HCT116 (cell line): ENCODE measurements at regions of chr17 and their contacts with region 1.

Region 1: DNA sequence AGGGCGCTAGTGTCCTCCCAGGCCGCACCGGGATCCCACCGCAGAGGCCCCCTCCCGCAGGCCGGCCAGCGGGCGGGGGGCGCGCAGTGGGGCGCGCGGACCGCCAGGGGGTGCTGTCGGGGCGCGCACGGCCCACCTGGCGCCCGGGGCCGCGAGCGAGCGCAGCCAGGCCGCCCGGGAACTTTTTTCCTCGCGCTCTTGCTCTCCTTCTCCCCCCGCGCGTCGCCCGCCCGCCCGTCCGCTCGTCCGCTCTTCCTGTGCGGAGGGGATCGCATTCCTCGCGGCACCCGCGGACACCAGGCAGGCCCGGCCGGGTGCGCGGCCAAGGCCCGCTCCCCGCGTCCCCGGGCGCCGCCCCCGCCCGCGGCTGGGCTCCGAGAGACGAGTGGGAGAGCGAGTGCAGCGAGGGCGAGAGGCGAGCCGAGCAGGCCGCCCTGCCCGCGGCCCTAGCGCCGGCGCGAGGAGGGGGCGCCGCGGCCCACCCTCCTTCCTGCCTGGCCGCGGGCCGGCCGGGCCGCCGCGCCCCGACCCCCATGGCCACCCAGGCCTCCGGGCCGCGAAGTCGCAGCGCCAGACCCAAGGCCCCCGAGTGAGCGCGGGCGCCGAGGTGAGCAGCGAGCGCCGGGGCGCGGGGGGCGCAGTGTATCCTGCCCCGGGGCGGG is at the start of gene RAI1:
- DNase-seq: no peak
- ATAC-seq: peak; percentile 62
- H3K4me3 ChIP-seq: peak within 1 kb of the TSS; percentile 75 to 86
- H3K27ac ChIP-seq: peak within 1 kb of the TSS; percentile 97
- H3K4me1 ChIP-seq: peaks cover 40 to 56% of the 10 kb centered on the region in 2 experiments
- H3K27me3 ChIP-seq: no peaks in the 10 kb centered on the region
- CTCF ChIP-seq: peak in 2 of 3 experiments; percentile 50 to 51; a peak in 4 of 6 replicates
- POLR2A ChIP-seq: no peak
- RAD21 ChIP-seq: peak; percentile 64
- total RNA-seq, gene RAI1: 38.5 TPM

Region 2: DNA sequence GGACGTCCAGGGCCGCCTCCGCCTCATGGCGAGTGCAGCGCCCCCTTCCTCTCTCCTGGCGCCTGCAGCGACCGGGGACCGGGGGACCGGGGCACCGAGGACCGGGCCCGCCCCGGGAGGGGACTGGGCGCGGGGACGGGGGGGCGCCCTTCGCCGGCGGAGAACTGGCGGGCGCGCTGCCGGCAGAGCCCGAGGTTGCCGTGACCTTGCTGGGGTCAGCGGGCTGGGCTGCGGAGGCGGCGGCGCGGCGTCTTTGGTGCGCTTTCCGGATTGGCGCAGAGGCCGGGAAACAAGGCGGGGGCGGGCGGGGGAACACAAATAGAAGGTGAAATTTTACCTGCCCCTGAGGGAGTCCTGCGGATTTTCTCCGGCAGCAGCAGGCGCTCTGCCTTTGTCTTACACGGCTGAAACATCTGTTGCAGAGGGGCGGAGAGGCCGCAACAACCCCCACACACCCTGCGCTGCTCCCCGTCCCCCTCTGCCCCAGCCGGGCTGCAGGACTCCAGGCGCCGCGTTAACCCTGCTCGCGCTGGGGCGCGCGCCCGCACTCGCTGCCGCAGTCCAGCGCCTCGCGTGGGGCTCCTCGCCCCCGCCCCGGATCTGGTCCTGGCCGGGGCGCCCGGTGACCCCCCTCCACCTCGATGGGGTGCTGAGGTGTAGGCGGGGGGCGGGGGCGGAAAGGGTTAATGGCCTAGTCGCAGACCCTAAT is 102.0 kb after region 1 on chr17:
- CTCF ChIA-PET with region 1: no interaction called
- POLR2A ChIA-PET with region 1: no interaction called
- RAD21 ChIA-PET with region 1: no interaction called
- intact Hi-C with region 1: loop called (anchors 10 kb)
- DNase-seq: no peak
- ATAC-seq: peak; percentile 72
- H3K4me3 ChIP-seq: peak overlapping the region; percentile 41 to 61
- H3K27ac ChIP-seq: peak overlapping the region; percentile 80
- H3K4me1 ChIP-seq: peaks cover 48 to 72% of the 10 kb centered on the region in 2 experiments
- H3K27me3 ChIP-seq: no peaks in the 10 kb centered on the region
- CTCF ChIP-seq: peak in 1 of 3 experiments; percentile 32; a peak in 2 of 6 replicates
- POLR2A ChIP-seq: no peak
- RAD21 ChIP-seq: no peak

Region 3: GRCh38 chr17:17836250-17836817 is 155.0 kb after region 1 on chr17:
- CTCF ChIA-PET with region 1: interaction called, 4 read pairs
- POLR2A ChIA-PET with region 1: interaction called, 6 read pairs
- RAD21 ChIA-PET with region 1: no interaction called
- intact Hi-C with region 1: loop called (anchors 10 kb)
- DNase-seq: peak; percentile 92
- ATAC-seq: peak; percentile 70
- H3K4me3 ChIP-seq: peak overlapping the region; percentile 78 to 84
- H3K27ac ChIP-seq: peak overlapping the region; percentile 98
- H3K4me1 ChIP-seq: peaks cover 55 to 84% of the 10 kb centered on the region in 2 experiments
- H3K27me3 ChIP-seq: no peaks in the 10 kb centered on the region
- CTCF ChIP-seq: no peak
- POLR2A ChIP-seq: peak; percentile 97
- RAD21 ChIP-seq: peak; percentile 15; the same call in 1 of the 2 replicates

Region 4: DNA sequence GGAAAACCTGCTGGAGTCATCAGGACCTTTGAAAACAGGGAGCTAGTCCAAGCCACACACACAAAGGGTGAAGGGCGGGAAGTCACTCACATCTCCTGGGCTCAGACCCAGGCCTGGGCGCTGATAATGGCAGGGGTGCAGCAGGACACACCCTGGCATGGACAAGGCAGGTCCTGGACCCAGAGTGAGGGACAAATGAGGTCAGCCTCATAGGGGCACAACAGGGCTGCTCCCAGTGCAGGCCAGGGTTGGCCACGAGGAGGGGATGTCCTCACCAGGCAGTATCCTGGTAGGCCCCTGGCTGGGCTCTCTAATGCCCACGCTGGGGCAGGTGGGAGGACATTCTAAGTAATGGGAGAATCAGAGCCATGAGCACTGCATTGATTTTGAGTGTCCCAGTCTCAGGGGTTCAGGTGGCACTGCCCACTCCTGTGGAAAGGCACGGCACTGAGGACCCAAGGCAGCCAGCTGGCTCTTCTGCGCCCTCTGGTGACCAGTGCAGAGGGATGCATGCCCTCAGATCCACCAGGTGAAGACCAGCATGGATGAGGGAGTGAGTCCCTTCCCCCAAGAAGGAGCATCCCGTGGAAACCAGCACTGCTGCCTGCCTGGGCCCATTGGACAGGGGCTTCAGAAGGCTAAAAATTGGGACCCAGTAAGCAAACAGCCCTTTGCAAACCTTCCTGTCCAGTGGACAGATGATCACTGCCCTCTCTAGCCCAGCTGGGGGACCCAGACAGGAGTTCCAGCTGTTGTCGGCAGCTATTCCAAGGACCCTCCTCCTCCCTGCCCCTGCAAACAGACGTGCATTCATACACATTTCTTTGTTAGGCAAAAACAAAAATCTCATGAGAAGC is 178.8 kb after region 1 on chr17:
- CTCF ChIA-PET with region 1: no interaction called
- POLR2A ChIA-PET with region 1: no interaction called
- RAD21 ChIA-PET with region 1: no interaction called
- intact Hi-C with region 1: loop called (anchors 1 kb)
- DNase-seq: no peak
- ATAC-seq: peak; percentile 98
- H3K4me3 ChIP-seq: no peak overlapping the region
- H3K27ac ChIP-seq: no peak overlapping the region
- H3K4me1 ChIP-seq: peaks cover 24 to 36% of the 10 kb centered on the region in 2 experiments; a peak in 3 of 4 replicates
- H3K27me3 ChIP-seq: no peaks in the 10 kb centered on the region
- CTCF ChIP-seq: peak; percentile 92 to 97 (median 93)
- POLR2A ChIP-seq: no peak
- RAD21 ChIP-seq: peak; percentile 99

Region 5: DNA sequence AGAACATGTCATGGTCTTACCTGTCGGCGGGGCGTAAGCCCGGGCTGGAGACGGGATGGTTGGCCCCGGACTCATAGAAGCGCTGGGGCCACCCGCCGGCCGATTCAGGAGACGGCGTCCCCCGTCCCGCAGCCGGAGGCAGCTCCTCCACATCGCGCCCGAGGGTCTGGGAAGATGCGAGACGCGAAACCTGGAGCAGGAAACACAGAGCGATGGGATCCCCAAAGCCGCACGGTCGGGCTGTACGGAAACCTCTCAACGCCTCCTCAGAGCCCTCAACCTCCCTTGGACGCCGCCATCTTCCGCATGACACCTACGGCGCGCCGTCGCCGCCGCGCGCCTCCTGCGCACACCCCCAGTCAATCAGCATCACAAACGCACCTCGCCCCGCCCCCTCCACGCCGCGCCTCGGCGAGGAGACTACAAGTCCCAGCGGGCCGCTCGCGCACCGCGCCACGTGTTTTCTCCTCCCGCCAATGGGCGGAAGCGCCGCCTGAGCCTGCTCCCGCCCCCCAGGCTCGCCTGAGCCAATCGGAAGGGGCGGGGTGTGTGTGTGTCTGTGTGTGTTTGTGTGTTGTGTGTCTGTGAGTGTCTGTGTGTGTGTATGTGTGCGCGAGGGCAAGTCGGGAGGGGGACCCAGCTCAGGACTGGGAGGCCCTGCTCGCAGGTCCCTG is 357.7 kb after region 1 on chr17 and contains the starts of genes ATPAF2 and GID4:
- CTCF ChIA-PET with region 1: no interaction called
- POLR2A ChIA-PET with region 1: no interaction called
- RAD21 ChIA-PET with region 1: no interaction called
- intact Hi-C with region 1: loop called (anchors 10 kb)
- DNase-seq: peak; percentile 97
- ATAC-seq: peak; percentile 92
- H3K4me3 ChIP-seq: peak within 1 kb of the TSS; percentile 84 to 85
- H3K27ac ChIP-seq: peak within 1 kb of the TSS; percentile 80
- H3K4me1 ChIP-seq: peaks cover 6 to 21% of the 10 kb centered on the region in 2 experiments; a peak in 3 of 4 replicates
- H3K27me3 ChIP-seq: no peaks in the 10 kb centered on the region
- CTCF ChIP-seq: peak in 1 of 3 experiments; percentile 12; a peak in 1 of 6 replicates
- POLR2A ChIP-seq: peak; percentile 59
- RAD21 ChIP-seq: no peak
- total RNA-seq, gene ATPAF2: 46.1 TPM
- total RNA-seq, gene GID4: 10.8 TPM